Body of pancreas (tissue), 4 donors: ENCODE measurements at regions of chr10 and their contacts with region 1.

Region 1: DNA sequence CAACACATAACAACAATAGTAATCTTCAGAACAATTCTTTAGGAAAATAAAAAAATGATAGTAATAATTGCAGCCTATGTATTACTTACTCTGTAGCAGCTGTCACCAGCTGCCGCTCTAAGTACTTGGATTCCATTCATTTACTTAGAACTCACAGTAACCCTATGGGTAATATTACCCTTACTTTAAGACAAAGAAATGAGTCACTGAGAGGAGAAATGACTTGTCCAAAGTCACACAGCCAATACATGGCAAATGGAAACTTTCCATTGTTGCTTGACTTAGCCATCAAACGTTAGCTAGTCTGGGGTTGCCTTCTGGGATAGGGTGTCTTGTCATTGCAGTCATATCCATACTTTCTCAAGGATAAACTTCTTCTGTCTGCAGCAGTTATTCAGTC is 3.6 kb downstream of the CCNY start:
- DNase-seq: no peak
- ATAC-seq: no peak
- H3K4me3 ChIP-seq: no peak overlapping the region
- H3K27ac ChIP-seq: no peak overlapping the region
- H3K4me1 ChIP-seq: peaks cover 24% of the 10 kb centered on the region
- H3K27me3 ChIP-seq: no peaks in the 10 kb centered on the region
- CTCF ChIP-seq: no peak
- POLR2A ChIP-seq: no peak

Region 2: DNA sequence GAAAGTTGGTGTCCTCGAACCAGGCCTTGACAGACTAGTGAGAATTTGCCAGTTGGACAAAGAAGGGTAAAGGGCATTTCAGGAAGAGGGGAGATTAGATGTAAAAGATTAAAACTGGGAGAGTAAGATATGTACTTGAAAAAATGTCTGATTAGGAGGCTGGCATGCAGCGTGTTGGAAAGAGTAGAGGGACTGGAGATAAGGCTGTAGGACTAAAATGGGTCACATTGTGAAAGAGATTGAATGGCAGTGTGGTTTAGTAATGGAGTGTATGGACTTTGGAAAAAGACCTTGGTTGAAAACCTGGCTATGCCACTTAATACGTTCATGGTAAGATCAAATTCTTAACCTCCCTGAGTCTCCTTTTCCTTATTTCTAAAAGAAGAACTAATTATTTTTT is 199.2 kb before region 1 on chr10:
- intact Hi-C with region 1: no loop called
- DNase-seq: no peak
- ATAC-seq: peak; percentile 74
- H3K4me3 ChIP-seq: no peak overlapping the region
- H3K27ac ChIP-seq: peak overlapping the region in 2 of 4 donors; percentile 19 to 64
- H3K4me1 ChIP-seq: peaks cover 15% of the 10 kb centered on the region
- H3K27me3 ChIP-seq: no peaks in the 10 kb centered on the region
- CTCF ChIP-seq: no peak
- POLR2A ChIP-seq: no peak

Region 3: DNA sequence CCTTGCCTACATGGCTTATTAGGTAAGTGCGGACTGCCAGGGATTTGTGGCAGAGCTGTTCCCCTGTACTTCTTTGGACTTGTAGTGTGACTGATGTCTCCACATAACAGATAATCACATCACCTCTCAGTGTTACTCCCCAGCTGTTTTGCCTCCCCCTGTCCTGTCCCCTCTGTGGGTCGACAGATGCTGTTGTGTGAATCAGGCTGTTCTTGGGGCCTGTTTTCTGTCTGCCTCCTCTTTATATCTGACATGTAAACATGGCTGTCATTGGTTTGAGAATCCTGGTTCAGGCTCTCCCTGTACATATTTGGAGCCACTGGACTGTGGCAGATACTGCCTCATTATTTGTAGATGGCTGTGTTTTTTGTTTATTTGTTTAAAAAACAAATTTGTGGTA is 19.1 kb after region 1 on chr10:
- intact Hi-C with region 1: loop called (anchors 2 kb)
- DNase-seq: no peak
- ATAC-seq: no peak
- H3K4me3 ChIP-seq: no peak overlapping the region
- H3K27ac ChIP-seq: no peak overlapping the region
- H3K4me1 ChIP-seq: peaks cover 8% of the 10 kb centered on the region
- H3K27me3 ChIP-seq: no peaks in the 10 kb centered on the region
- CTCF ChIP-seq: no peak
- POLR2A ChIP-seq: no peak

Region 4: GRCh38 chr10:35462491-35462934 is 122.6 kb after region 1 on chr10:
- intact Hi-C with region 1: loop called (anchors 10 kb)
- DNase-seq: peak in 1 of 4 donors; percentile 27
- ATAC-seq: no peak
- H3K4me3 ChIP-seq: no peak overlapping the region
- H3K27ac ChIP-seq: no peak overlapping the region
- H3K4me1 ChIP-seq: peaks cover 49% of the 10 kb centered on the region
- H3K27me3 ChIP-seq: no peaks in the 10 kb centered on the region
- CTCF ChIP-seq: no peak
- POLR2A ChIP-seq: no peak

Region 5: DNA sequence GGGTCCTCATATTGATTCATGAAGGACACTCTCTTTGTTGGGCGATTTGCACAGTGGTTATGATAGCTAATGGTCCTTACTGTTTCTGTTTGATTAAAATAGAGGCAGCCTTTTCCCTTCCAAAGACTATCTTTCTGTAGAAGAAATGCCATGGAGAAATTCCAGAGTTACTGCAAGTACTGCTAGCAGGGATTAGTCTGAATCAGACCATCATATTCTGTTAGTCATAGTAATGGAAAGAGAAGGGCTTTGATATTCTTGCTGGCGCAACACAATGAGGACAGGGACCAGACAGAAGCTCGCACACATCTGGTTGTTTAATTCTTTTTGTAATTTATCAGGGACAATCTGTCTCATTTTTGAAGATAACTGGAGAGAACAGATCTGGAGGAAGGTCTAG is 606.6 kb after region 1 on chr10:
- intact Hi-C with region 1: no loop called
- DNase-seq: no peak
- ATAC-seq: no peak
- H3K4me3 ChIP-seq: no peak overlapping the region
- H3K27ac ChIP-seq: no peak overlapping the region
- H3K4me1 ChIP-seq: peaks cover 7% of the 10 kb centered on the region
- H3K27me3 ChIP-seq: no peaks in the 10 kb centered on the region
- CTCF ChIP-seq: no peak
- POLR2A ChIP-seq: no peak